Colonic mucosa (tissue), 4 donors: ENCODE measurements at regions of chr9 and their contacts with region 1.

Region 1: GRCh38 chr9:137067860-137068538 is 2.4 kb downstream of the SAPCD2 start:
- DNase-seq: peak; percentile 88
- H3K4me3 ChIP-seq: no peak overlapping the region
- H3K27ac ChIP-seq: peak overlapping the region; percentile 53
- H3K4me1 ChIP-seq: peaks cover 20% of the 10 kb centered on the region
- H3K27me3 ChIP-seq: no peaks in the 10 kb centered on the region
- CTCF ChIP-seq: peak; percentile 89

Region 2: GRCh38 chr9:137049544-137050449 is 18.2 kb before region 1 on chr9:
- intact Hi-C with region 1: loop called (anchors 2 kb)
- DNase-seq: peak; percentile 77
- H3K4me3 ChIP-seq: no peak overlapping the region
- H3K27ac ChIP-seq: no peak overlapping the region
- H3K4me1 ChIP-seq: peaks cover 26% of the 10 kb centered on the region
- H3K27me3 ChIP-seq: peaks cover 27% of the 10 kb centered on the region
- CTCF ChIP-seq: peak; percentile 41

Region 3: DNA sequence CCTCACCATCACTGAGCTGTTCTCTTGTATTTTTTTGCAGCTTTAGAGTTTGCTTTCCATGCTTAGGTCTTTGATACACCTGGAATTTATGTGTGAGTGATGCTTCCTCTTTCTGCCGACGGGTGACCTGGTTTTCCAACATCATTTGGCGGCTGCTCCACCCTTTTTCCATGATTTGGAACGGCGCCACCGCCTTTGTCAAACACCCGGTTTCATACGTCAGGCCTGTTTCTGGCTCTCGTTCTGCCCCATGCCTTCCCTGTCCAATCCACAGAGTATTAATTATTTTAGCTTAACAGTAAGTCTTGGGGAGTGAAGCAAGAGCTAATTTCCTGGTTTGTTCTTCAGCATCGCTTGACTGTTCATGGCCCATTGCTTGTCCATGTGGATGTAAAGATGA is 839.8 kb after region 1 on chr9:
- intact Hi-C with region 1: no loop called
- DNase-seq: no peak
- H3K4me3 ChIP-seq: no peak overlapping the region
- H3K27ac ChIP-seq: no peak overlapping the region
- H3K4me1 ChIP-seq: no peaks in the 10 kb centered on the region
- H3K27me3 ChIP-seq: no peaks in the 10 kb centered on the region
- CTCF ChIP-seq: no peak